ENCODE measurements at regions of chr19 and their contacts with region 1.

Region 1: GRCh38 chr19:38245826-38246498 is 10.2 kb downstream of the PPP1R14A start:
- DNase-seq: peak in 1 of 2 donors; percentile 41
- H3K4me3 ChIP-seq: no peak overlapping the region
- H3K27ac ChIP-seq: peak overlapping the region; percentile 60 to 73
- H3K4me1 ChIP-seq: no peaks in the 10 kb centered on the region
- H3K27me3 ChIP-seq: no peaks in the 10 kb centered on the region
- CTCF ChIP-seq: no peak
- POLR2A ChIP-seq: no peak

Region 2: GRCh38 chr19:38233740-38234251 is 12.2 kb before region 1 on chr19:
- intact Hi-C with region 1: loop called (anchors 1 kb)
- DNase-seq: peak; percentile 36 to 78
- H3K4me3 ChIP-seq: no peak overlapping the region
- H3K27ac ChIP-seq: no peak overlapping the region
- H3K4me1 ChIP-seq: peaks cover 3 to 5% of the 10 kb centered on the region in 2 donors
- H3K27me3 ChIP-seq: peaks cover 5 to 31% of the 10 kb centered on the region in 2 donors
- CTCF ChIP-seq: peak; percentile 57 to 73 (median 70)
- POLR2A ChIP-seq: no peak

Region 3: DNA sequence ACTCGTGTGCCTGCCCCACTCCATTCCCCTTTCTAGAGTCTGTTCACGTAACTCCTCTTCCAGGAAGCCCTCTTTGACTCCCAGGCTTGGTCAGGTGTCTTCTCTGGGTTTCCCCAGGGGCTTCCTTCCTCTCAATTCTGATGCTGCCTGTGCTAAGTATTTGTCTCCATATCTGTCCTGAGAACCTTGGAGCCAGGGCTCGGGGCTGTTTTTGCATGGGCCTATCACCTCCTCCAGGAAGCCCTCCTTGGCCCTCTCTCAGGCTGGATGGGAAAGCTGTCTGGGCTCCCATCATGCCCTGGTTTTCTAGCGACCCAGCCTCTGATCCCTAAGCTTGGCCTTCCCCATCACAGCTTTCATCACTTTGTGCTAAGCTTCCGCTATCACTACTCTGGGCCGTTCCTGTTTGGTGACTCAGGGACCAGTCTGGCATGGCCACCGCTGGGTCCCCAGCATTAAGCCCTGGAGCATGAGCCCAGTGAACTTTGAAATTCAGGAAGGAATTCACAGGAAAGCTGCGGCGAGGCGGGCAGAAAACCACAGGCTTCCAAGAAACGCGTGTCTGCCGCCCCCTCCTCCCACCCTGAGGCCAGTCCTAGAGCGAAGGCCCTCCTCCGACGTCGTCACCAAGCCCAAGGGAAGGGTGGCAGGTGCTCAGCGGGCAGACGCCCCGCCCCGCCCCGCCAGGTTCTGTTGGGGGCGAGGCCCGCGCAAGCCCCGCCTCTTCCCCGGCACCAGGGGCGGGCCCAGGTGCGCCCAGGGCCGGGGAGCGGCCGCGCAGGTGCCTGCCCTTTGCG is 17.9 kb after region 1 on chr19:
- intact Hi-C with region 1: no loop called
- DNase-seq: peak in 1 of 2 donors; percentile 95
- H3K4me3 ChIP-seq: peak overlapping the region; percentile 44 to 89 (median 67)
- H3K27ac ChIP-seq: peak overlapping the region; percentile 97 to 98
- H3K4me1 ChIP-seq: peaks cover 0 to 6% of the 10 kb centered on the region in 2 donors
- H3K27me3 ChIP-seq: no peaks in the 10 kb centered on the region
- CTCF ChIP-seq: no peak
- POLR2A ChIP-seq: no peak

Region 4: DNA sequence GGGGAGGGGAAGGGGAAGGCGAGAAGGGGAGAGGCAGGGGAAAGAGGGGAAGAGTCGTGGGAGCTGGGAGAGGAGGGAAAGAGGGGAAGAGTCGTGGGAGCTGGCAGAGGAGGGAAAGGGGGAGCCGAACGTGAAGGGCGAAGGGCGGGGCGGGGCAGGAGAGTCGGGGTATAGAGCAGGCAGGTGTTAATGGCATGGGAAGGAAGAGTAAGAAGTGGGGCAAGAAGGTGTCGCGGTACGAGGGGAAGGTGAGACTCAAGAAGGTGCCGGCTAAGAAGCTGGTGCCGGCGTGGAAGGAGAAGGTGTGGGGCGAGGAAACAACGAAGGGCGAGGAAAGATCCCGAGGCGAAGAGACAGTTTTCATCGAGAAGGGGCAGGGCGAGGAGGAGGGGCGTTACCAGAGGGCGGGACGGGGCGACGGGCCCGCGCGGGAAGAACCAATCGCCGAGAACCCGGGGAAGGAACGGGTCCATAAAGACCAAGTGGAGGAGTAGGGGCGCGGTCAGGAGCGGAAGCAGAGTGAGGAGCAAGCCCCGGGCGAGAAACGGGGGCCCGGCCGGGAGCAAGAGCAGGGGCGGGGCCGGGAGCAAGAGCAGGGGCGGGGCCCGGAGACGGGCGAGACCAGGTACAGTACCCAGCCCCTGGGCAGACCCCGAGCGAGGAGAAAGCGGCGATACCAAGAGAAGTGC is 90.1 kb after region 1 on chr19:
- intact Hi-C with region 1: loop called (anchors 10 kb)
- DNase-seq: peak; percentile 94 to 95
- H3K4me3 ChIP-seq: peak overlapping the region; percentile 76 to 78 (median 76)
- H3K27ac ChIP-seq: peak overlapping the region; percentile 97 to 100
- H3K4me1 ChIP-seq: no peaks in the 10 kb centered on the region
- H3K27me3 ChIP-seq: no peaks in the 10 kb centered on the region
- CTCF ChIP-seq: no peak
- POLR2A ChIP-seq: peak; percentile 40